ENCODE measurements at regions of chr9 and their contacts with region 1.

Region 1: GRCh38 chr9:122498883-122499288 is 11.7 kb upstream of the OR1J2 start:
- DNase-seq: peak; percentile 61 to 82
- H3K4me3 ChIP-seq: no peak overlapping the region
- H3K4me3 Mint-ChIP-seq: no peak overlapping the region
- H3K27ac Mint-ChIP-seq: no peak overlapping the region
- H3K4me1 ChIP-seq: no peaks in the 10 kb centered on the region
- H3K4me1 Mint-ChIP-seq: no peaks in the 10 kb centered on the region
- H3K27me3 ChIP-seq: no peaks in the 10 kb centered on the region
- H3K27me3 Mint-ChIP-seq: peaks cover 4% of the 10 kb centered on the region
- CTCF ChIP-seq: peak; percentile 54 to 66

Region 2: GRCh38 chr9:122526600-122526999 is 27.7 kb after region 1 on chr9:
- CTCF ChIA-PET with region 1: no interaction called
- POLR2A ChIA-PET with region 1: no interaction called
- intact Hi-C with region 1: loop called (anchors 2 kb)
- DNase-seq: no peak
- H3K4me3 ChIP-seq: no peak overlapping the region
- H3K4me3 Mint-ChIP-seq: no peak overlapping the region
- H3K27ac Mint-ChIP-seq: no peak overlapping the region
- H3K4me1 ChIP-seq: no peaks in the 10 kb centered on the region
- H3K4me1 Mint-ChIP-seq: peaks cover 6% of the 10 kb centered on the region
- H3K27me3 ChIP-seq: peaks cover 3% of the 10 kb centered on the region; the same call in 1 of the 2 replicates
- H3K27me3 Mint-ChIP-seq: peaks cover 2% of the 10 kb centered on the region
- CTCF ChIP-seq: no peak